ENCODE measurements at regions of chr5 and their contacts with region 1.

Region 1: DNA sequence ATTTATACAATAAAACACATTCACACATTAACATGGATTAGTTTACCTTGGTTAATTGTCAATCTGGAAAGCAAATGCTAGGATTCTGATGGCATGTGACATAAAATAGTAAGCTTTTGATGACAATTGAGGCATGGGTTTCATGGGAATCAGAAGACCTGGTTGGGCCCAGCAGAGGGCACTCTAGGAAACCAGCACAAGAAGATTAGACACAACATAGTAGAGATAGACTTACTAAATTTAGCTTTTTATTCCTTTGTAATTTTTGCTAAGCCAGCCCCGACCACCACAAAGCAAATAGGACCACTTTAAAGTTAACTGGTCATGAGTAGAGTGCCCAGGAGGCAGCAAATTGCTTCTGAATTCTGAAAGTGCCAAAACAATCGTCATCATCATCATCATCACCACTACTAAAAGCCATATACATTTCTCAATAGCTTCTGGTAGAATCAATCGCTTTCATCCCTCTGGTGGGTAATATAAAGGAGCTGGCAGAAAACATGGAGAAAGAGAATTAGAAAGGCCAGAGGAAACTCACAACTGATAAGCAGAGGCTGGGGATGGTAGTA is 163.2 kb downstream of the ARRDC3 start:
- DNase-seq: no peak
- ATAC-seq: peak; percentile 27 to 42

Region 2: DNA sequence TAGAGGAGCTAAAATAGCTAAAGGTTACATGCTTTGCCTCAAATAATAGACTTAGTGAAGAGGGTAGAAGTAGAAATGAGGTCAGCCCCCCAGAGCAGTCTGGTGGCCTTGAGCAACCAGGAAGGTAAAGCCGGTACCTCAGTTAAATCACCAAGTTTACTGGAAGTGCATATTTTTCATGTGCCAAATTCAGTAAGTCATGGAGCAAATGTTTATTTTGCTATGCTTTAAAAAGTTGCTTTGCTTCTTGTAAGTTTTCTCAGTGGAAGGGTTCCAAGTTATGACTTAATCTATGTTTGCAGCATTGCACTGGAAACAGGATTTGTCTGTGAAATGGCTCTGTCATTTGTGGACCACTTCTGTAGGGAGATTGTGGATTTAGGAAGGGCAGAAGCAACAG is 93.4 kb before region 1 on chr5:
- intact Hi-C with region 1: loop called in 1 of 2 experiments (anchors 10 kb)
- DNase-seq: no peak
- ATAC-seq: peak; percentile 29 to 67

Region 3: GRCh38 chr5:91139572-91140200 is 80.2 kb before region 1 on chr5:
- intact Hi-C with region 1: no loop called
- DNase-seq: no peak
- ATAC-seq: peak in 1 of 2 donors; percentile 47